ENCODE measurements at regions of chr11 and their contacts with region 1.

Region 1: GRCh38 chr11:1810761-1811160 is 24.0 kb upstream of the SYT8 start:
- DNase-seq: no peak
- H3K4me3 ChIP-seq: no peak overlapping the region
- H3K27ac ChIP-seq: no peak overlapping the region
- H3K27me3 ChIP-seq: peaks cover 0 to 8% (median 0%) of the 10 kb centered on the region in 45 donors
- CTCF ChIP-seq: no peak

Region 2: GRCh38 chr11:1113405-1114201 is 697.2 kb before region 1 on chr11:
- intact Hi-C with region 1: loop called in 1 of 2 experiments (anchors 10 kb)
- DNase-seq: peak in 5 of 10 donors; percentile 16 to 39 (median 32)
- H3K4me3 ChIP-seq: no peak overlapping the region
- H3K27ac ChIP-seq: no peak overlapping the region
- H3K27me3 ChIP-seq: no peaks in the 10 kb centered on the region
- CTCF ChIP-seq: no peak

Region 3: DNA sequence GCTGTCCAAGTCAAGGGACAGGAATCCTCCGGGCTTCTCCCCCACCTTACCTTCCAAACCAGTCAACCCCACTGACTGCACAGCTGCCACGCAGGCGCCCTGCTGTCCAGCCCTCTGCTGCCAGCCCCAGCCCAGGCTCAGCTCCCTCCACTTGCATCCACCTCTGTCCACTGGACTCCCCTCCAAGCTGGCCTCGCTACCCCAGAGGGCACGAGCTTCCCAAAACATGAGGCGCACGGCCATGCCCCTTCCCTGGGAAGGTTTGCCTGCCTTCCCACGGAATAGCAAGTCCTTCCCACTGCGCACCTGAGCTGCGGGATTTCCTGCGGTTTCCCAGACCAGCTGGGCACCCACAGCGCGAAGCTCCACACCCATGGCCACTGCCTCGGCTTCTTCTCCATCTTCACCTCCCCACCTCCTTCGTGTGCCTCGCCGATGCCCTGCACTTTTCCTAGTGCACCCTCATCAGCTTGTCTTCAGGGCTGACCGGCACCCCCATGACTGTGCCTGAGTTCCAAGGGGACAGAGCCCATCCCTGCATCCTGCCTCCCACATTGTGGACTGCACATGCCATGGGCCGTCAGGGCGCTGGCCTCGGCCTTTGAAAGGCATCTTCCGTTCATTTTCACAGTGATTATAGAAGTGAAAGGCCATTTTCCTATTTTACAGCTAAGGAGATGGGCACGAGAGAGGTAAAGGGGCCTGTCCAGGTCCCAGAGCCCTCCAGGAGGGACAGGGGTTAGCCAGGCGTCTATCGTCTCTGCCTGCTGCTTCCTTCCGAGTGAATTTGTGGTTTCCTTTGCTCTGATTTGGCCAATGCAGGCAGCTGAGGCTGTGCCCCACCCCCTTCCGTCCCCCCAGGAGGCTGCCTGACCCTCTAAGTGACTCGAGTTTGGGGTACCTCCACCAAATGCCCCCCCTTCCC is 76.8 kb before region 1 on chr11:
- intact Hi-C with region 1: no loop called
- DNase-seq: no peak
- H3K4me3 ChIP-seq: no peak overlapping the region
- H3K27ac ChIP-seq: no peak overlapping the region
- H3K27me3 ChIP-seq: peaks cover 0 to 27% (median 3%) of the 10 kb centered on the region in 45 donors
- CTCF ChIP-seq: no peak